ENCODE measurements at regions of chr2 and their contacts with region 1.

Region 1: DNA sequence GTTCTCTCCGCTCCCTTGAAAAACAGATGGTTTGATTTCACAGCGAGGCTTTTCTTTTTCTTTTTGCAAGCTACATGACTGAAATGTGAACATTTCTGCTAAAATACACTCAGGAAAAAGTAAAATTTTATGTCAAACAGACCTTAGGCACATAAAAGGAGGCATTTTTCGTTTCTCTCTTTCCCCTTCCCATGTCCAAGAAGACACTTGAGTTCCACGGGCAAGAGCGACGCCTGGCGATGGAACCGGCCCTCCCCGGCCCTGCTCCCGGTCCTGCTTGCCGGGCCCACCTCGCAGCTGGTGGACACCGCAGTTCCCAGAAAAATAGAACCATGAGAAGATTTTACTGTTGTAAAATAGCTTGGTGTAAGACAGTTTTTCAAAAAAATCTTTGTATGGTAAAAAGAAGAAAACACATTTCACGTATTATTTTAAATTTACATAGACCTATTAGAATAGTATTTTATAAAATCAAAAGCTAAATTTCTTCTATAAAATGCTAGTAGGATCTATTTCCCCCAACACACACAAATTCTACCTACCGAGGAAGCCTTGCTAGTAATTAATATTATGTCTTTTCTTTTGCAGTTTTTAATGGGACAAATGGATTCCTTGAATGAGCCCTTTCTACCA is 2.3 kb upstream of the ALKAL2 start:
- DNase-seq: peak in 1 of 2 donors; percentile 83
- H3K4me3 ChIP-seq: peak overlapping the region; percentile 54 to 73
- H3K27ac ChIP-seq: peak overlapping the region; percentile 77 to 80
- H3K4me1 ChIP-seq: peaks cover 3 to 8% of the 10 kb centered on the region in 2 donors
- H3K27me3 ChIP-seq: no peaks in the 10 kb centered on the region
- CTCF ChIP-seq: peak; percentile 57 to 78 (median 72)

Region 2: DNA sequence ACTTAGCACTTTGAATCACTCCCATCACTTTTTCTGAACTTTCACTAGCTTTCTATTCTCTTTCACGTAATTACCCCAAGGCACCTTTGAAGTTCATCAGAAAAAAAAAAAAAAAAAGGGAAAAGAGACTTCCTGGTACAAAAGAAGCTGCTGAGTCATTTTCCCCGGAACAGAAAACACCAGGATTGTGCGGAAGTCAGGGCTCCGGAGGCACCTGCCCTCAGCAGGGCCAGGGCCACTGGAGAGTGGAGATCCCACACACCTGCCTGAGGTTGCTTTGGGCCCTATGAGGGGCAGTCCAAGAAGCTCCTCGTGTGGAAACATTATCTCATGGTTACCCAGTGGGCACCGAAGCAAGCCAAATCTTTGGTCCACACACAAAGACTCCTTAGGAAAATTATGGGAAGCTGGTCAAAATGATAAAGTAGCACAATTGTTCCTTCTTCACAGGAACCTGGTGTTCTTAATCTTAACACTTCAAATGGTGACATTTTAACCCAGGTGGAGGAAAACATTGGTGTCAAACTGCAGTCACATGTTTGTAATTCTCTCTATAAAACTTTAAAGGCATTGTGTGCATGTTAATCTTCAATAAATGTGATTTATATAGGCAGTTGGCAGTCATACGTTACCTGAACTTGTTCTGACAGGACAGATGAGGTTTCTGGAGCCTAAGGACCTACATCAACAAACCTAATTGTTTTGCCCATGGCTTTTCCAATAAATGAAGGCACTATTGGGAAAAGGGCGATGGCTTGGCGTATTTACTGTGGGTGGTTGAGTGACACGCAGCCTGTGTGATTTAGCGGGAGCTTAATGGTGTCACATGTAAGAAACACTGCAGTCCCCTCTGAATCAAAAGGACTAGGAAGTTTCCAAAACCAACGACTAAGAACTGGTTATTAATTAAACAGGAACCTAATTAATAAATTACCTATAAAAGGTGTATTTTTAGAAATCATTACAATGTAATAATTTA is 220.6 kb before region 1 on chr2:
- intact Hi-C with region 1: no loop called
- DNase-seq: no peak
- H3K4me3 ChIP-seq: no peak overlapping the region
- H3K27ac ChIP-seq: no peak overlapping the region
- H3K4me1 ChIP-seq: no peaks in the 10 kb centered on the region
- H3K27me3 ChIP-seq: no peaks in the 10 kb centered on the region
- CTCF ChIP-seq: no peak

Region 3: GRCh38 chr2:175880-176800 is 114.1 kb before region 1 on chr2:
- intact Hi-C with region 1: loop called (anchors 1 kb)
- DNase-seq: no peak
- H3K4me3 ChIP-seq: no peak overlapping the region
- H3K27ac ChIP-seq: no peak overlapping the region
- H3K4me1 ChIP-seq: peaks cover 0 to 4% of the 10 kb centered on the region in 2 donors
- H3K27me3 ChIP-seq: no peaks in the 10 kb centered on the region
- CTCF ChIP-seq: no peak

Region 4: GRCh38 chr2:246489-247144 is 43.6 kb before region 1 on chr2:
- intact Hi-C with region 1: loop called (anchors 1 kb)
- DNase-seq: no peak
- H3K4me3 ChIP-seq: no peak overlapping the region
- H3K27ac ChIP-seq: no peak overlapping the region
- H3K4me1 ChIP-seq: no peaks in the 10 kb centered on the region
- H3K27me3 ChIP-seq: no peaks in the 10 kb centered on the region
- CTCF ChIP-seq: peak; percentile 14 to 55 (median 41)

Region 5: DNA sequence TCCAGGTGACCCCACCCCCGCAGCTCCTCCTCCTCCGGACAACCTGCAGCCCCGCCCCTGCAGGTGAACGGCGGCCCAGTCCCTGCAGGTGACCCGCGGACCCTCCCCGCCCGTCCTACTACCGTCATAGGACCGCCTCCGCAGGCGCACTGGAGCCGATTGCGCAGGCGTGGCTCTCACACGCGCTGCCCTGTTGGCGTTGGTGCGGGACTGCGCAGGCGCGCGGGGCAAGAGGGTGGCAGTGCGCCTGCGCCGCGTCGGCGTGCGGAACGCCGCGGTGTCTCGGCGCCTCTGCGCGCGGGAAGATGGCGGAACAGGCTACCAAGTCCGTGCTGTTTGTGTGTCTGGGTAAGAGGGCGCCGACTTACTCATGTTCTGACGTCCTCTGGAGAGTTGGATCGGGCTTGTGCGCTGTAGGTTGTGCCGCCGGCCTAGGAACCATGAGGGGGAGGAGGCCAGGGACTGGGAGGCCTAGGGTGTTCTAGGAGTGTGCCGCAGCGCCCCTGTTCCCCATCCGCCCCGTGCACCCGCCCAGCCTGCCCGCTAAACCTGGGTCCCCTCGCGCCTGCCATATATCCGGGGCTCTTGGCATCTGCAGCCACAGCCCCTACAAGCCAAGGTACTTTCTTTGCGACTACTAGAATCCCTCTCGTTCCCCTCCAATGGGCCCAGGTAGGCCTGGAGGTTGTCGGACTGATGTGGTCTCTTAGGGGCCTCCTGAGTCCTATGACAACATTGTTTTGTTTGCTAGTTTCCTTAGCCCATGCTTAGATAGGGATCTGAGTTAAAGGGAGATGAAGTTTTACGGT is 25.3 kb before region 1 on chr2 and contains the start of gene ACP1:
- intact Hi-C with region 1: loop called (anchors 2 kb)
- DNase-seq: peak; percentile 74 to 95
- H3K4me3 ChIP-seq: peak within 1 kb of the TSS; percentile 73 to 86
- H3K27ac ChIP-seq: peak within 1 kb of the TSS; percentile 56 to 71
- H3K4me1 ChIP-seq: peaks cover 5 to 11% of the 10 kb centered on the region in 2 donors
- H3K27me3 ChIP-seq: no peaks in the 10 kb centered on the region
- CTCF ChIP-seq: no peak
- total RNA-seq, gene ACP1: 30.8 TPM